ENCODE measurements at regions of chr3 and their contacts with region 1.

Region 1: GRCh38 chr3:194472290-194472920 is 14.4 kb downstream of the ATP13A3 start:
- DNase-seq: no peak
- ATAC-seq: peak; percentile 78 to 94 (median 89)
- H3K4me3 ChIP-seq: no peak overlapping the region
- H3K27ac ChIP-seq: no peak overlapping the region
- H3K4me1 ChIP-seq: peaks cover 0 to 13% (median 0%) of the 10 kb centered on the region in 3 donors
- H3K27me3 ChIP-seq: no peaks in the 10 kb centered on the region
- CTCF ChIP-seq: peak; percentile 78 to 90 (median 86)

Region 2: DNA sequence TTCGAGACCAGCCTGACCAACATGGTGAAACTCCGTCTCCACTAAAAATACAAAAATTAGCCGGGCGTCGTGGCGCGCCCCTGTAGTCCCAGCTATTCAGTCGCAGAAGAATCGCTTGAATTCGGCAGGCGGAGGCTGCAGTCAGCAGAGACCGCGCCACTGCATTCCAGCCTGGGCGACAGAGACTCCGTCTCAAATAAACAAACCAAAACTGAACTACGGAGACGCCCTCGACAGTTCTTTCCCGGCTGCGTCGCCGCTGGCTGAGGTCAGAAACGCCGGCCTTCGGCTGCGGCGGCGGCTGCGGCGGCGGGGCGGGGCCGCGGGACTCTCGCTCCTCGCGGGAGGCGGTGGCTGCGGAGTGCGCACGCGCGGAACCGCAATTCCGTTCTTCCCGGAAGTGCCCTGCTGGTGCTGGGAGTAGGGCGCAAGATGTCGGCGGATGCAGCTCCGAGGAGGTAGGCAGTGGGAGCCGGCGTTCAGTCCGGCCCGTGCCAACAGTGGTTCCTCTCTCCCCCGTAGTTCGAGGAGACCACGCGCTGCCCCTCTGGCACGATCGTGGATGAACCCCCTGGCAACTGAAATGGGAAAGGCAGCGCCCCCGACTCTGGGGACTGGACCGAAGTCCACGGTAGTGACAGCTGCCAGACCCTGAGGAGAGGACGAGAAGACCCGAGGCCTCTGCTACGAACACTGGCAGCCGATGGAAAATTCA is 111.4 kb after region 1 on chr3:
- intact Hi-C with region 1: loop called in 1 of 3 experiments (anchors 10 kb)
- DNase-seq: peak; percentile 90 to 100 (median 96)
- ATAC-seq: peak; percentile 96 to 99 (median 98)
- H3K4me3 ChIP-seq: peak overlapping the region; percentile 54 to 88 (median 82)
- H3K27ac ChIP-seq: peak overlapping the region; percentile 66 to 94 (median 84)
- H3K4me1 ChIP-seq: peaks cover 0 to 9% (median 5%) of the 10 kb centered on the region in 3 donors
- H3K27me3 ChIP-seq: no peaks in the 10 kb centered on the region
- CTCF ChIP-seq: no peak

Region 3: DNA sequence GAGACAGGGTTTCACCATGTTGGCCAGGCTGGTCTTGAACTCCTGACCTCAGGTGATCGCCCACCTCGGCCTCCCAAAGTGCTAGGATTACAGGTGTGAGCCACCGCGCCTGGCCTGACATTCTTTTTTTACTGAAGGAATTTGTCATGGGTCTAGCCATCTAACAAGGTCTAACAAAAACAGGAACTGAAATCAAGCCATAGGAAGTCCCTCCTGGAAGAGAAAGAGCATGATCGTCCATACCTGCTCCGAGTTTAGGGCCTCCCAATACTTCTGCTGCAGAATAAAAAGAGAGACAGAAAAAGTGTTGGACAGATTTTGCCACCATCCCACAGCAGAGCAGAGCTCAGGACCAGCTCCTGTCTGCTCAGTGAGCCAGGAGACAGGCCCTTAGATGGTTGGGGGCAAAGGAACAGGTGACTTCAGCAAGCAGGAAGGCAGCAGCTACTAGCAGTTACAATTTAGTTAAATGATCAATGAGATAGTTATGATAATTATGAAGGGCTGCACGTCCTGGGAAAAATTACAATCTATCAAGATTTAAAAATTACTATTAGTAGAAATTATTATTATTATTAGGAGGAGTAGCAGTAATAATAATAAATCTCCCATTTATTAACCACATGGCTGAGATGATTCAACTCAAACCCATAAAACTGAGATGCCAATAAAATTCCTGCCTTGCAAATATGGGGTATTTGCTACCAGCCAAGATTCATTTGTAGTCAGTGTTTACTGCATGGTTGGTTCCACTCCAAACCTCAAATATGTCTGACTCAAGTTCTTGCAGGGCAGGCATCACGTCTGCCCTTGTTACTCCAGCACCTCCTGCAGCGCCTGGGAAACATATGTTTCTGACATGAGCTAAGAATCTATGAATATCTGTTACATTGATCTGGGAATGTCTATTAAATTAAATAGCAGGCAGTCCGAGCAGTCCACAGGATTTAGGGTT is 120.7 kb after region 1 on chr3:
- intact Hi-C with region 1: loop called in 2 of 3 experiments (anchors 10 kb)
- DNase-seq: no peak
- ATAC-seq: peak in 3 of 4 donors; percentile 61 to 73 (median 70)
- H3K4me3 ChIP-seq: no peak overlapping the region
- H3K27ac ChIP-seq: peak overlapping the region in 2 of 4 donors; percentile 47 to 54
- H3K4me1 ChIP-seq: peaks cover 0 to 3% (median 0%) of the 10 kb centered on the region in 3 donors
- H3K27me3 ChIP-seq: no peaks in the 10 kb centered on the region
- CTCF ChIP-seq: no peak

Measured in pancreas (tissue), 10 donors.